ENCODE measurements at regions of chr3 and their contacts with region 1.

Region 1: DNA sequence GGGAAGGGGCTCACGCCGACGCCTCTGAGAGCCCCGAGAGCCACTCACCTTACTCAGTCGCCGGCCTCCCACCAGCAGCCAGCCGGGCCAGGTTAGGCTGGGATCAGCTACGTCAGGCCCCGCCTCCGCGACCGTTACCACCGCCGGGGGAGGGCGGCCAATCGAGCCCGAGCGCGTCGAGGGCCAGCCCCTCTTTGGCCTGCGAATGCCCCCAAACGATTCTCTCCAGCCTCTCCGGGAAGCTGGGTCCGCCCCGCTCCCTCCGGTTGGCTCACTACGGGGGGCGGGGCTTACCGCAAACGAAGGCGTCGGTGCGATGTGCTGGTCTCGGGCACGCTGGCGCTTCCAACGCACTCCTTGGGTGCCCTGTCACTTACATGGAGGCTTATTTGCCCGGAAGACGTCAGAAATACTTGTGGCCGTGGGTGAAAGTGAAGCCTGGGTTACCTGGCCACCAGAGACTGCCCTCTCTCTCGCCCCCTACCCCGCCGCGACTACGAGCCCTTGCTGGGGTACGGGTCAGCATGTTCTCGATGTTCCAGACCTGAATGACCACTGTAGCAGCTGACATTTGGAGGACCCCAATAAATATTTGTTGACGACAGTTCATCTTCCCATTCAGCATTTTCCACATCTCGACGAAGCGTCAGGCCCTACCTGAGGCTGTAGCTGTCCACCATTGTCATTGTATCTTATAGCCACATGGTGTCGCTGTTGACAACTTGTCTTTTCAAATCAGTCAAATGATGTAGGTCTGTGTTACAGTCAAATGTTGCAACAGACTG is at the start of gene CEP70:
- DNase-seq: peak; percentile 79 to 92 (median 89)
- ATAC-seq: peak; percentile 95
- H3K4me3 ChIP-seq: peak within 1 kb of the TSS; percentile 96
- H3K4me3 Mint-ChIP-seq: peak within 1 kb of the TSS; percentile 87 to 96 (median 90)
- H3K27ac ChIP-seq: peak within 1 kb of the TSS; percentile 79
- H3K27ac Mint-ChIP-seq: peak within 1 kb of the TSS; percentile 82 to 99 (median 94)
- H3K4me1 ChIP-seq: peaks cover 0 to 4% of the 10 kb centered on the region in 2 donors
- H3K4me1 Mint-ChIP-seq: peaks cover 0 to 17% (median 12%) of the 10 kb centered on the region in 7 donors
- H3K27me3 ChIP-seq: no peaks in the 10 kb centered on the region
- H3K27me3 Mint-ChIP-seq: no peaks in the 10 kb centered on the region
- total RNA-seq, gene CEP70: 11.8 to 35.1 (median 21.1) TPM

Region 2: DNA sequence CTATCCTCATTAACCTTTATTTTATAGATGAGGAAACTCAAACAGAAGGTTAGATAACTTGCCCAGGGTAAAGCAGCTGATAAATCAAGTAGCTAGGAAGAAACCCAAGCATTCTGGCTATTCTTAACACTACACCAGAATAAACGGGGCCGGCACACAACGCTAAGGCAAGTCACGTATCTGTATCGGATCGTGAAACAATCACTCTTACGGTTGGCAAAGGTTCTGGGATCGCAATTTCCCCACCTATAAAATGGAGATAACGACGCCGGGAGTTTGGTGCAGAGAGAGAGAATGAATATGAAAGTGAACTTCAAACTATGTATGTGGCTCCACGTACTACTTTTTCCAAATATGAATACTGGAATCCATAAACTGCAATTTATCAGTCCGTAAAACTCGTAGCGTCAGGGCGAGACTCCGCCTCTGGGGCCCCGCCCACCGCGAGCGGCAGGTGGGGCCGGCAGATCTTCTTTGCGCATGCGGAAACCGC is 407.5 kb before region 1 on chr3:
- CTCF ChIA-PET with region 1: interaction called, 3 read pairs
- POLR2A ChIA-PET with region 1: interaction called, 6 read pairs
- intact Hi-C with region 1: loop called in 1 of 2 experiments (anchors 2 kb)
- DNase-seq: peak; percentile 83 to 91 (median 87)
- ATAC-seq: peak; percentile 96
- H3K4me3 ChIP-seq: peak overlapping the region; percentile 98
- H3K4me3 Mint-ChIP-seq: peak overlapping the region; percentile 89 to 99 (median 97)
- H3K27ac ChIP-seq: peak overlapping the region; percentile 86
- H3K27ac Mint-ChIP-seq: peak overlapping the region; percentile 92 to 96 (median 93)
- H3K4me1 ChIP-seq: peaks cover 13 to 24% of the 10 kb centered on the region in 2 donors
- H3K4me1 Mint-ChIP-seq: peaks cover 32 to 54% (median 45%) of the 10 kb centered on the region in 7 donors
- H3K27me3 ChIP-seq: no peaks in the 10 kb centered on the region
- H3K27me3 Mint-ChIP-seq: peaks cover 0 to 19% (median 9%) of the 10 kb centered on the region in 5 donors

Region 3: DNA sequence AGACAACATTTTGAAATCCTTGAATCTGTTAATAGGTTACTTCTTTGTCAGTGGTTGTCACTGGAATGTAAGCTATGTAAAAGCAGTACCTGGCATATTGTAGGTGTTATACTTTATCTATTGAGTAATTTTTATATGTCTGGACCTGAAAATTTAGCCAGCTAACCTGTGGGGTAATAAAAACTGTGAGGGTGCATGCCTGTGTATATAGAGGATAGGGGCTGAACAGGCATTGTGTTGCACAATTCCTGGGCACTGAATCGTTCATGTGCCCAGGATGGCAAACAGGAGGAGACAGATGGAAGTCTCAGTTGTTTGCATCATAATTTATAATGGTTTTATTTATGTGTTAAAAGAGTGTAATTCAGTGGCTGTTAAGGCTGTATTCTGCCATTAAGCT is 340.1 kb before region 1 on chr3:
- CTCF ChIA-PET with region 1: no interaction called
- POLR2A ChIA-PET with region 1: no interaction called
- intact Hi-C with region 1: no loop called
- DNase-seq: no peak
- ATAC-seq: no peak
- H3K4me3 ChIP-seq: no peak overlapping the region
- H3K4me3 Mint-ChIP-seq: no peak overlapping the region
- H3K27ac ChIP-seq: no peak overlapping the region
- H3K27ac Mint-ChIP-seq: no peak overlapping the region
- H3K4me1 ChIP-seq: no peaks in the 10 kb centered on the region
- H3K4me1 Mint-ChIP-seq: no peaks in the 10 kb centered on the region
- H3K27me3 ChIP-seq: no peaks in the 10 kb centered on the region
- H3K27me3 Mint-ChIP-seq: no peaks in the 10 kb centered on the region

Region 4: DNA sequence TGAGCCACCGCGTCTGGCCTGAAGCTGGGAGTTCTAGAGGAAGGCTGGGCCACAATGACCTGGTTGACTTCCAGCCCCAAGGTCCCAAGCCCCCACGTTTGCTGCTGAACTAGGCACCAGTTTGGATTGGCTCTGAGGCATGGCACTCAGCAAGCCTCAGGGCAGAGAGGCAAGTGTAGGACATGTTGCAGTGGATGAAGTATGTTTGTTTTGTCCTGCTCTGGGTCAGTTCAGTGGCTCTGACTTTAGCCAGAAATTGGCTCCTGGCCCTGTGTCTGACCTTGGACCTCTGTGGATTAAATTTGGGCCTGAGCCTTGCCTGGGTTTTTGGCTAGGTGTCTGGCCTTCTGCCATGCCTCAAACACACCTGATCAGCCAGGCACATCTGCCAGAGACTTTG is 249.6 kb before region 1 on chr3:
- CTCF ChIA-PET with region 1: no interaction called
- POLR2A ChIA-PET with region 1: no interaction called
- intact Hi-C with region 1: no loop called
- DNase-seq: no peak
- ATAC-seq: no peak
- H3K4me3 ChIP-seq: no peak overlapping the region
- H3K4me3 Mint-ChIP-seq: no peak overlapping the region
- H3K27ac ChIP-seq: no peak overlapping the region
- H3K27ac Mint-ChIP-seq: no peak overlapping the region
- H3K4me1 ChIP-seq: no peaks in the 10 kb centered on the region
- H3K4me1 Mint-ChIP-seq: peaks cover 0 to 11% (median 9%) of the 10 kb centered on the region in 7 donors
- H3K27me3 ChIP-seq: no peaks in the 10 kb centered on the region
- H3K27me3 Mint-ChIP-seq: peaks cover 25 to 29% (median 26%) of the 10 kb centered on the region in 5 donors

Region 5: GRCh38 chr3:138479438-138479863 is 114.9 kb before region 1 on chr3:
- CTCF ChIA-PET with region 1: no interaction called
- POLR2A ChIA-PET with region 1: no interaction called
- intact Hi-C with region 1: loop called in 1 of 2 experiments (anchors 1 kb)
- DNase-seq: peak in 1 of 9 donors; percentile 8
- ATAC-seq: no peak
- H3K4me3 ChIP-seq: no peak overlapping the region
- H3K4me3 Mint-ChIP-seq: no peak overlapping the region
- H3K27ac ChIP-seq: no peak overlapping the region
- H3K27ac Mint-ChIP-seq: no peak overlapping the region
- H3K4me1 ChIP-seq: no peaks in the 10 kb centered on the region
- H3K4me1 Mint-ChIP-seq: peaks cover 0 to 2% (median 0%) of the 10 kb centered on the region in 7 donors
- H3K27me3 ChIP-seq: no peaks in the 10 kb centered on the region
- H3K27me3 Mint-ChIP-seq: peaks cover 0 to 11% (median 0%) of the 10 kb centered on the region in 5 donors

Region 6: GRCh38 chr3:138653567-138653966 is 59.2 kb after region 1 on chr3:
- CTCF ChIA-PET with region 1: no interaction called
- POLR2A ChIA-PET with region 1: no interaction called
- intact Hi-C with region 1: no loop called
- DNase-seq: no peak
- ATAC-seq: no peak
- H3K4me3 ChIP-seq: no peak overlapping the region
- H3K4me3 Mint-ChIP-seq: no peak overlapping the region
- H3K27ac ChIP-seq: no peak overlapping the region
- H3K27ac Mint-ChIP-seq: no peak overlapping the region
- H3K4me1 ChIP-seq: no peaks in the 10 kb centered on the region
- H3K4me1 Mint-ChIP-seq: no peaks in the 10 kb centered on the region
- H3K27me3 ChIP-seq: no peaks in the 10 kb centered on the region
- H3K27me3 Mint-ChIP-seq: no peaks in the 10 kb centered on the region

Region 7: DNA sequence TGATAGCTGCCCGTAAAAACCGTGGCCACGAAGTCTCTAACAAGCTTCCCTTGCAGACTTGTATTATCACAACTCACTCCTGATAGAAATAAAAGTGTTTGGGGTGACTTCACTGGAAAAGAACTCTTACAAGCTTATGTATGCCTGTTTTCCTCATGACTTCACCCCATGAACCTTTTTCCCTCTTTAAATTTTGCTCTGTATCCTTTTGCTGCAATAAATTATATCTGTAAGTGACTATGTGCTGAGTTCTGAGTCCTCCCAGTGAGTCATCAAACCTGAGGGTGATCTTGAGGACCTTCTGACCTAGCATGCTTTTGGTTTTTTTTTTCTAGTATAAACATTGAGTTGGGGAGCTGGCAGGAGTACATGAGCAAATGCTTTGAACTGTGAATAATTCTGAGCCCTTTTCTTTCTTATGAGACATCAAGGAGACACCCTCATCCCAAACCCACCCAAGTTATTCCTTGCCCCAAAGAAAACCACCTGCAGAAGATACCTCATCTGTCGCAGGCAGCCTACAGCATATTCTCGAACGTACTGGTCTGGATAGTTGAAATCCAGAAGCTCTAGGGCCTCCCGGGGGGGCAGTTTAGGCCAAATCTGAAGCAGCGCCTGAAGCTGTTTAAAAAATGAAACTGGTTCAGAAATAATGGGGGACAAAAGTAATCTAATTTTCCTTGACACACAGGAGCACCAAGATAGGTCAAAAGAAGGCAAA is 100.1 kb after region 1 on chr3:
- CTCF ChIA-PET with region 1: interaction called, 5 read pairs
- POLR2A ChIA-PET with region 1: no interaction called
- intact Hi-C with region 1: loop called (anchors 2 kb)
- DNase-seq: no peak
- ATAC-seq: no peak
- H3K4me3 ChIP-seq: no peak overlapping the region
- H3K4me3 Mint-ChIP-seq: no peak overlapping the region
- H3K27ac ChIP-seq: no peak overlapping the region
- H3K27ac Mint-ChIP-seq: no peak overlapping the region
- H3K4me1 ChIP-seq: no peaks in the 10 kb centered on the region
- H3K4me1 Mint-ChIP-seq: peaks cover 0 to 4% (median 0%) of the 10 kb centered on the region in 7 donors
- H3K27me3 ChIP-seq: no peaks in the 10 kb centered on the region
- H3K27me3 Mint-ChIP-seq: no peaks in the 10 kb centered on the region

Region 8: DNA sequence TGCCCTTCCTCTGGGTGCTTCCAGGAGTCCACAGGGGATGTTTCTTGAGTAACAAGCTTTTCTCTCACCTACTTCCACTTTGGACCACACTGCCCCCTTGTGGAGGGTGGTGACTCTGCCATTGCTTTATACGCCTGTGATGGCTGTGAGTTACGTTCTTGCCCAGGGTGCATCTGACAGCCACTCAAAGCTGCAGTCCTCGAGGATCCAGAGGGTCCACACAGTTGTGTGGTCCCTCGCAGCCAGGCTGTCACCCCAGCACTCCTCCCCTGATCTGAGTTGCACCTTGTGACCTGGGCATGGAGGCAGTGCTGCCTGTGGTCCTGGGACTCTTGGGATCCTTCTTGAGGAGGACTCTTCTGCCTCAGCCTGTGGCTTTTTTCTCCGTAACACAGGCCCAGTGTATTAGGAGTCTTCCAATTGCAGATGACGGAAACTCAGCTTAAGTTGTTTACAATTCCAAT is 329.2 kb after region 1 on chr3:
- CTCF ChIA-PET with region 1: interaction called, 29 read pairs
- POLR2A ChIA-PET with region 1: interaction called, 4 read pairs
- intact Hi-C with region 1: loop called (anchors 1 kb)
- DNase-seq: peak; percentile 65 to 86 (median 77)
- ATAC-seq: peak; percentile 96
- H3K4me3 ChIP-seq: no peak overlapping the region
- H3K4me3 Mint-ChIP-seq: no peak overlapping the region
- H3K27ac ChIP-seq: no peak overlapping the region
- H3K27ac Mint-ChIP-seq: peak overlapping the region in 1 of 9 donors; percentile 35
- H3K4me1 ChIP-seq: no peaks in the 10 kb centered on the region
- H3K4me1 Mint-ChIP-seq: peaks cover 0 to 5% (median 0%) of the 10 kb centered on the region in 7 donors
- H3K27me3 ChIP-seq: no peaks in the 10 kb centered on the region
- H3K27me3 Mint-ChIP-seq: peaks cover 0 to 13% (median 4%) of the 10 kb centered on the region in 5 donors

Measured in naive thymus-derived CD4-positive, alpha-beta T cell (primary cell).